Cardiac septum (tissue), 1 donor: ENCODE measurements at regions of chr12 and their contacts with region 1.

Region 1: DNA sequence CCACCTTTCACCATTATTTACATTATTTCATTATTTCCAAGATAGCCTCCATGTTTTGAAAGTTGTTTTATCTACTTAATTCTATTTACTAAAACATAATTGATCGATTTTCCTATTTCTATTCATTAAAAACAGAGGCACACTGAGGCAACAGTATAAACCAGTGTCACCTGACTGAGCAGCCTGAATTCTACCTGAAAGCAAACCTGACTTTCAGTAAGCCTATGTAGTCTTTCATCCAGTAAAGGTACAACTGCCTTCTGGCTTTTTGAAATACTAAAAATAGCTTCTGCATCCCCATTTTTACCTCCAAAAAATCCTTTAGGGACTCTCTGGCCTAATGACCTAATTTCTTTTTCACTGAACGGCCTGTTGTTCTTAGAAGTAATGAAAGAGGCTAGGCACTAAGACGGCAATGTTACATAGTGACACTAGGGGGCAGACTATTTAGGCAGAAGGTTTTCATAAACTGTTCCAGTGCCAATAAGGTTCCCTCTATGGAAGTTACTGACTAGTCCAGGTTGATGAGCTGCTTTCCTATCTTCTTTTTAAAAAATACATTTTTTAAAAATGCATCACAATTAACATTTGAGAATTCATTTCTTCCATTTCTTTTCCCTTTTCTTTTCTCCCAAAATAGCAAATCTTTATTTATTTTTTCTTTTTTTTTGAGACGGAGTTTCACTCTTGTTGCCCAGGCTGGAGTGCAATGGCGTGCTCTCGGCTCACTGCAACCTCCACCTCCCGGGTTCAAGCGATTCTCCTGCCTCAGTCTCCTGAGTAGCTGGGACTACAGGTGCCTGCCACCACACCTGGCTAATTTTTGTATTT is 17.5 kb downstream of the ANAPC5 start:
- DNase-seq: no peak

Region 2: DNA sequence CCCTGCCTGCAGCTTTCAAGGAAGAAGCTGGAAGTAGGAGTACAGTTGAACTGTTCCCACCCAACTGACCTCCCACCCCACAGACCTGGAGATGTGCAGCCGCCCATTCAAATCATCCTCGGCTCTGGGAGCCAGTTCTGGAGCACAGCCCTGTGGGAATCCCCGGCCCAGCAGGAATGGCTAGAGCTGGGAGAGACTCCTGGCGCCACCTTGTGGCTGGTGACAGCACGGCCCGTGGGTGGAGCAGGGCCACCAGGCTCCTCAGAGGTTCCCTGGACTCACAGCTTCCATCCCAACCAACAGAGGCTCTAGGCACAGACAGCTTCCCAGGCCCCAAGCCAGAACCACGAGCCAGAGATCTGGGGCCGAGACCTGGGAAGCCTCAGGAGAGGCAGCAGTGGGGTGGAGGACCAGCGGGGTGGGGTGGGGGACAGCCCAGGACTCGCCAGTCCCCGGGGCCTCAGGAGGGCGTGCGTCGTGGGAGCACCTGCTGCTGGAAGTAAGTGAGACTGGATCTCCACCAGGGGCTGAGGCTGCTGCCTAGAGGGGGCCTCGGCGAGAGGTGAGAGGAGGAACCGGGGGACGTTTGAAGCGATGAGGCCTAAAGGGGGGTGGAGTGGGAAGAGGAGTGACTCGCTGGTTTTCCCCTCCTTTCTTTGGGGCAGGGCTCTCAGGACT is 108.6 kb after region 1 on chr12:
- intact Hi-C with region 1: loop called (anchors 2 kb)
- DNase-seq: peak; percentile 93